Heart left ventricle (tissue), 16 donors: ENCODE measurements at regions of chrX and their contacts with region 1.

Region 1: DNA sequence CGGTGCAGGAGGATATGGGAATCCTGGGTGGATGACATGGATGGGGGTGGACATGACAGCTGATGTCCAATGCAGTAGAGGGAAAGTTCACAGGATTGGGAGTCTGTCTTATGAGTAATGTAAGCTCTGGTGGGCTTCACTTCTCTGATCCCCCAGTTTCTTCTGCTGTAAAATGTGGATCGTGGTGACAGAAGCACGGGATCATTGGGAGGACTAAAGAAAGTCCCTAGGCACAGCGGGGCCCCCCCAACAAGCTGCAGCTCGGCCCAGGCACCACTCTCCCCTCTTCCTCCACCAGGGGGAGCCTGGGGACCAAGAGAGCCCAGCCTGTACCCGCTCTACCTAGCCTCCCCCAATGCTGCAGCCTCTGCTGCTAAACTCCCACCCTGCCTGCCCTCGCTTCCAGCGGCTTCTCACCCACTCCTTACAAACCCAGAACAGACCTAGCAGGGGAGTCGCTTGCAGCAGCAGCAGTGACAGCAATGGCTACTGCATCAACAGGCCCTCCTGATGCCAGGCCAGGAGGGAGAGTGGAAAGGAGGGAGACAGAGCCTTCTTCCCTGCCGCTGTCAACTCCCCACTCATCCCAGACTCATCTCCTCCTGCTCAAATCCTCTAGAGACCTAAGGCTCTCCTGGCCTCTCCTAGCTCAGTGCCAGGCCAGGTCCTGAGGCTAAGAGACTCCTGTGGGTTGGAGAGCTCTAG is 36.1 kb upstream of the IQSEC2 start:
- DNase-seq: peak; percentile 40 to 73 (median 60)
- ATAC-seq: peak; percentile 74 to 85 (median 78)
- H3K4me3 ChIP-seq: no peak overlapping the region
- H3K27ac ChIP-seq: no peak overlapping the region
- H3K4me1 ChIP-seq: peaks cover 0 to 35% (median 0%) of the 10 kb centered on the region in 12 donors
- H3K27me3 ChIP-seq: peaks cover 0 to 65% (median 0%) of the 10 kb centered on the region in 9 donors
- CTCF ChIP-seq: peak; percentile 54 to 88 (median 70)
- POLR2A ChIP-seq: no peak

Region 2: DNA sequence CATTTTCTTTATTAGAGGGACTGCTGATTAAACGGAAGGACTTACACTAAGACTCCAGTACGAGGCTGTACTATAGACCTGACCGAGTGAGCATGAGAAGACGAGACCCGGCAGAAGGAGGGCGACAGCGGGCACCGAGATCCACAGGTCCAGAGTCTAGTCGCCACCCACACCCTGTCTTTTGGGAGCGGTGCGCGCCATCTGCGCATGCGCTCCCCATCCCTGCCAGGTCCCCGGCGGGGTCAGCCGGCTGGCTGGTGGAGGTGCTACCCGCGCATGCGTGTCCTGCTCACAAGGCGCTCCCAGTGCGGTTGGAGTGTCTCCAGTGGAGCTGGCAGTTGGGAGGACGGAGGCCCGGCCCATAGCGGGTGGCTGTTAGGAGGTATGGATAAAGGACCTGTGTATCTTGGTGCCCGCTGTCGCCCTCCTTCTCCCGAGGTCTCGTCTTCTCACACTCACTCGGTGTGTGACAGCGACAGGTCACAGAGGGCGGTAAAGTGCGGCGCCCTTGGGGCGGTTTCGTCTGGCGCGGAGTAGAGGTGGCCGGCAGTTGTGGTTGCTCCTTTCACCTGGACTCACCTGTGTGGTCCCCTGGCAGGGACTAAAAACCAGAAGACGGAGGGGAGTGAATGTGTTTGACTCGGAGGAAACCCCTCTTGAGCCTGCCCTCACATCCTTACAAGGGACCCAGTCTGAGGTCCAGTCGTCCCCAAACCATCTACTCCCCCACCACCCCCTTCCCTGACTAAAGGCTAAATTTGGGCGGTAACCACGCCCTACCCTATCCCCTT is 124.2 kb after region 1 on chrX:
- intact Hi-C with region 1: loop called in 9 of 10 experiments (anchors 2 to 10 kb)
- DNase-seq: peak; percentile 69 to 90 (median 89)
- ATAC-seq: peak; percentile 89 to 94 (median 90)
- H3K4me3 ChIP-seq: peak overlapping the region in 10 of 12 donors; percentile 33 to 57 (median 46)
- H3K27ac ChIP-seq: peak overlapping the region in 7 of 12 donors; percentile 20 to 78 (median 42)
- H3K4me1 ChIP-seq: peaks cover 0 to 27% (median 4%) of the 10 kb centered on the region in 12 donors
- H3K27me3 ChIP-seq: peaks cover 0 to 38% (median 0%) of the 10 kb centered on the region in 9 donors
- CTCF ChIP-seq: no peak
- POLR2A ChIP-seq: peak in 1 of 2 donors; percentile 40